PC-9 (cell line): ENCODE measurements at regions of chr20 and their contacts with region 1.

Region 1: GRCh38 chr20:33791959-33792597 is 19.1 kb upstream of the CHMP4B start:
- DNase-seq: peak in 1 of 2 experiments; percentile 57
- H3K4me3 ChIP-seq: no peak overlapping the region
- H3K27ac ChIP-seq: no peak overlapping the region; the same call in 1 of the 2 replicates
- H3K4me1 ChIP-seq: peaks cover 76% of the 10 kb centered on the region
- H3K27me3 ChIP-seq: no peaks in the 10 kb centered on the region
- CTCF ChIP-seq: peak; percentile 99

Region 2: GRCh38 chr20:32263398-32263954 is 1528.6 kb before region 1 on chr20:
- CTCF ChIA-PET with region 1: no interaction called
- POLR2A ChIA-PET with region 1: no interaction called
- intact Hi-C with region 1: no loop called
- DNase-seq: no peak
- H3K4me3 ChIP-seq: no peak overlapping the region
- H3K27ac ChIP-seq: no peak overlapping the region
- H3K4me1 ChIP-seq: no peaks in the 10 kb centered on the region; the same call in 1 of the 2 replicates
- H3K27me3 ChIP-seq: no peaks in the 10 kb centered on the region
- CTCF ChIP-seq: no peak

Region 3: GRCh38 chr20:33725647-33726571 is 66.2 kb before region 1 on chr20:
- CTCF ChIA-PET with region 1: no interaction called
- POLR2A ChIA-PET with region 1: interaction called, 11 read pairs
- intact Hi-C with region 1: no loop called
- DNase-seq: no peak
- H3K4me3 ChIP-seq: no peak overlapping the region
- H3K27ac ChIP-seq: no peak overlapping the region; the same call in 1 of the 2 replicates
- H3K4me1 ChIP-seq: peaks cover 54% of the 10 kb centered on the region
- H3K27me3 ChIP-seq: no peaks in the 10 kb centered on the region
- CTCF ChIP-seq: no peak

Region 4: DNA sequence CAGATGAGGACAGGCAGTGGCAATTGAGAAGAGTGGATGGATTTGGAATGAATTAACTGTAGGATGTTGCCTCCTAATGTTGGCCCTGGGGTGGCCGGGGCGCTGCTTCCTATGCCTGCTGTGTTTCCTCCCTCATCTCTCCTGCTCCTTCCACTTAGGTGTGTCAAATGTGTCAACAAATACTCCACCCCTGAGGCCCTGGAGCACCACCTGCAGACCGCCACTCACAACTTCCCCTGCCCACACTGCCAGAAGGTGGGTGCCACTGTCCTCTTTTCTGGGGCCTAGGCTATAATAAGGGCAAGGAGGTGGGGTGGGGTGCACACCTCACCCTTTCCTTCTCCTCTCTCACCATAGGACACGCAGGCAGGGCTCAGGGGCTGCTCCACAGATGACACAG is 10.9 kb before region 1 on chr20:
- CTCF ChIA-PET with region 1: no interaction called
- POLR2A ChIA-PET with region 1: interaction called, 44 read pairs
- intact Hi-C with region 1: loop called (anchors 1 kb)
- DNase-seq: no peak
- H3K4me3 ChIP-seq: no peak overlapping the region
- H3K27ac ChIP-seq: peak overlapping the region; percentile 98; the same call in 1 of the 2 replicates
- H3K4me1 ChIP-seq: peaks cover 48% of the 10 kb centered on the region
- H3K27me3 ChIP-seq: no peaks in the 10 kb centered on the region
- CTCF ChIP-seq: no peak

Region 5: GRCh38 chr20:33862709-33863403 is 70.8 kb after region 1 on chr20:
- CTCF ChIA-PET with region 1: interaction called, 3 read pairs
- POLR2A ChIA-PET with region 1: interaction called, 4 read pairs
- intact Hi-C with region 1: loop called (anchors 5 kb)
- DNase-seq: peak in 1 of 2 experiments; percentile 21
- H3K4me3 ChIP-seq: no peak overlapping the region
- H3K27ac ChIP-seq: no peak overlapping the region
- H3K4me1 ChIP-seq: peaks cover 22% of the 10 kb centered on the region
- H3K27me3 ChIP-seq: no peaks in the 10 kb centered on the region
- CTCF ChIP-seq: peak; percentile 58

Region 6: GRCh38 chr20:34069341-34070078 is 277.4 kb after region 1 on chr20:
- CTCF ChIA-PET with region 1: no interaction called
- POLR2A ChIA-PET with region 1: no interaction called
- intact Hi-C with region 1: loop called (anchors 5 kb)
- DNase-seq: peak; percentile 70 to 75
- H3K4me3 ChIP-seq: no peak overlapping the region
- H3K27ac ChIP-seq: 0 out of 2 replicates have a peak overlapping the region, but pooled peaks have one; percentile 33
- H3K4me1 ChIP-seq: peaks cover 13% of the 10 kb centered on the region; the same call in 1 of the 2 replicates
- H3K27me3 ChIP-seq: no peaks in the 10 kb centered on the region
- CTCF ChIP-seq: peak; percentile 89

Region 7: DNA sequence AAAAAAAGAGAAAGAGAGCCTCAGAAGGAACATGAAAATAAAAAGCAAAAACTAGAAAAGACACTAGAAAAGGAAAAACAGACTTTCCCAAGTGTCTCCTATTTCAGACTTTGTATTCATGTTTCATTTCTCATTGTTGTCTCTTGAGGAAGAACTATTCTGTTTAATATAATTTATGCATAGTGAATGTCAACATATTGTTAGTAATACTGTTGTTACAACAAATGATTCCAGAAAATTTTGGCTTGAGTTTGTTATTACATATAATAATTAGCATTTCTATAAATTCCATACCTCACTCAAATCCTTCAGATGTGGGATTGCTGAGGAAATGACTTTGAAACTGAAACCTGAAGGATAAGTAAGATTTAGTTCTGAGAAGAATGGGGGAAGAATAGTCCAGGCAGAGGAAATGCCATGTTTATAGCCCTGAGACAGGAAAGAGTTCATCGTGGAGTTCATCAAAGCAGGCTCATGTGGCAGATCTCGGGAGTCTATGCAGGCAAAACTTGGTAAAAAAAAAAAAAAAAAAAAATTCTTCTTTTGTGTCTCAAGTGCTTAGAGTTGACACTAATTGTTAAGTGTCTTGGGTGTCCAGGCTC is 373.0 kb after region 1 on chr20:
- CTCF ChIA-PET with region 1: interaction called, 12 read pairs
- POLR2A ChIA-PET with region 1: no interaction called
- intact Hi-C with region 1: no loop called
- DNase-seq: no peak
- H3K4me3 ChIP-seq: no peak overlapping the region
- H3K27ac ChIP-seq: no peak overlapping the region
- H3K4me1 ChIP-seq: no peaks in the 10 kb centered on the region
- H3K27me3 ChIP-seq: no peaks in the 10 kb centered on the region
- CTCF ChIP-seq: no peak

Region 8: DNA sequence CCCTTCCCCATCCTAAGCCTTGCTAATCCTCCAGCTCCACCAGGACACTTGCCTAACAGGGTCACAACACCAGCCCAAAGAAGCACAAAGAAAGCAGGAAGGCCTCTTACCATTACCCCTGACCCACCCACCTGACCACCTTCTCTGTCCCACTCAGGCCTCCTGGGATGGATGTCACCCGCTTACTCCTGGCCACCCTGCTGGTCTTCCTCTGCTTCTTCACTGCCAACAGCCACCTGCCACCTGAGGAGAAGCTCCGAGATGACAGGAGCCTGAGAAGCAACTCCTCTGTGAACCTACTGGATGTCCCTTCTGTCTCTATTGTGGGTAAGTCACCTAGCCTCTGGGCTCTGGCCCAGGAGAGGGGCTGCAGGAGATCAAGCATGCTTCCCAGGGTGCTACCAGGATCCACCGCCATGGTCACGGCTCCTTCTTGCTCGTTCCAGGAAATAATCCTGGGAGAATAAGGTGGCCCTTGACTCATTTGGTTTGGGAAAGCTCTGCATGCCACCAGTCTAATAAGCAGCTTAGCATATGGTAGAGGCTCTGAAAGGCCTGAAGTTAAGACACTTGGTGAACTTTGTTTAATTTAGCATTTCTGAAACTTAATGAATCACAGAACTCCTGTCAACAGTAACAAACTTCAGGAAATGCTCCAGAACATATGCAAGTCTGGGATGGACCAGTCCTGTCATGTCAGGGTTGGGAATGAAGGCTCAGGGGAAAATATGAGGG is 468.3 kb after region 1 on chr20:
- CTCF ChIA-PET with region 1: no interaction called
- POLR2A ChIA-PET with region 1: no interaction called
- intact Hi-C with region 1: no loop called
- DNase-seq: no peak
- H3K4me3 ChIP-seq: no peak overlapping the region
- H3K27ac ChIP-seq: no peak overlapping the region
- H3K4me1 ChIP-seq: no peaks in the 10 kb centered on the region
- H3K27me3 ChIP-seq: no peaks in the 10 kb centered on the region
- CTCF ChIP-seq: no peak